Dendritic cell treated with granulocyte-macrophage colony-stimulating factor and Interleukin-4, amounts not matched to agents 40 ng/mL and 50 ng/mL, for 4 days (primary cell): ENCODE measurements at regions of chr5 and their contacts with region 1.

Region 1: GRCh38 chr5:180868960-180869359 is 7.9 kb upstream of the ZFP62 start:
- H3K4me3 Mint-ChIP-seq: no peak overlapping the region
- H3K27ac Mint-ChIP-seq: no peak overlapping the region
- H3K4me1 Mint-ChIP-seq: peaks cover 26% of the 10 kb centered on the region
- H3K27me3 Mint-ChIP-seq: peaks cover 13% of the 10 kb centered on the region

Region 2: GRCh38 chr5:180784497-180785097 is 84.4 kb before region 1 on chr5:
- intact Hi-C with region 1: loop called (anchors 5 kb)
- H3K4me3 Mint-ChIP-seq: no peak overlapping the region
- H3K27ac Mint-ChIP-seq: no peak overlapping the region
- H3K4me1 Mint-ChIP-seq: peaks cover 67% of the 10 kb centered on the region
- H3K27me3 Mint-ChIP-seq: no peaks in the 10 kb centered on the region